ENCODE measurements at regions of chr17 and their contacts with region 1.

Region 1: DNA sequence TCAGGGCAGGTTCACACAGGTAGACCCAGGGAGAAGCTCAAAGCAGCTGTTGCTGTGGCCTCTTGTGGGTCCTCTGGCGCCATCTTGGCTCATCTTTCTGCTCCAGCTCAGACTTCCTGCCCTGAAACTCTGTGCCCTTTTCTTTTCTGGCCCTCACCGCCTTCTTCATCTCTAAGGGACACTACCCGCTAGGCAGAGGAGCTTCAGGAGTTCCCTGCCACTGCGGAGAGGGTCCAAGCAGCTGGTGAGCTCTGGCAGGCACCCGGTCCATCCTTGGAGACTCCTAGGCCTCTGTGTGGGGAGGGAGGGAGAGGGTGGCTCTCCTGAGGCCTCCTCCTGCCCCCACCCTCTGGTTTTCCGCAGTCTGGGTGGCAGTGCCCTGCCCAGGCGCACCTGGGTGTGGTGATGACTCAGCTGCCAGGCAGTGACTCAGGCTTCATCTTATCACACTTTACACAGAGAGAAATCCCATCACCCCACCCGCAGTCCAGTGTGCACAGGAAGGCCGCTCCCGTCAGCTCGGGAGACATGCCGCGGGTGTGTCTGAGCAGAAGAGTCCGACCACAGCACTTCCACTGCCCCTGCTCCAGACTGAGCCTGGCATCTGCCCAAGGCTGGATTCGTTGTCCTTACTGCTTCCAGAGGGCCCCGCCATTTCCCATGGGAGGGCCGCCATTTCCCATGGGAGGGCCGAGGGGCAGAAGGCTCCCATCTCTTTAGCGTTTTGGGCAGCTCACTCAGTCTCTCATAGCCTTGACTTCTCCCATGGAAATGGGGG is 7.3 kb downstream of the NT5C start:
- DNase-seq: peak in 4 of 5 donors; percentile 30 to 79 (median 40)
- H3K4me3 ChIP-seq: no peak overlapping the region
- H3K4me3 Mint-ChIP-seq: peak overlapping the region in 7 of 8 donors; percentile 4 to 75 (median 46)
- H3K27ac ChIP-seq: peak overlapping the region; percentile 21
- H3K27ac Mint-ChIP-seq: peak overlapping the region; percentile 67 to 93 (median 85)
- H3K4me1 ChIP-seq: peaks cover 30% of the 10 kb centered on the region
- H3K4me1 Mint-ChIP-seq: peaks cover 24 to 40% (median 30%) of the 10 kb centered on the region in 4 donors
- H3K27me3 ChIP-seq: no peaks in the 10 kb centered on the region
- H3K27me3 Mint-ChIP-seq: no peaks in the 10 kb centered on the region

Region 2: DNA sequence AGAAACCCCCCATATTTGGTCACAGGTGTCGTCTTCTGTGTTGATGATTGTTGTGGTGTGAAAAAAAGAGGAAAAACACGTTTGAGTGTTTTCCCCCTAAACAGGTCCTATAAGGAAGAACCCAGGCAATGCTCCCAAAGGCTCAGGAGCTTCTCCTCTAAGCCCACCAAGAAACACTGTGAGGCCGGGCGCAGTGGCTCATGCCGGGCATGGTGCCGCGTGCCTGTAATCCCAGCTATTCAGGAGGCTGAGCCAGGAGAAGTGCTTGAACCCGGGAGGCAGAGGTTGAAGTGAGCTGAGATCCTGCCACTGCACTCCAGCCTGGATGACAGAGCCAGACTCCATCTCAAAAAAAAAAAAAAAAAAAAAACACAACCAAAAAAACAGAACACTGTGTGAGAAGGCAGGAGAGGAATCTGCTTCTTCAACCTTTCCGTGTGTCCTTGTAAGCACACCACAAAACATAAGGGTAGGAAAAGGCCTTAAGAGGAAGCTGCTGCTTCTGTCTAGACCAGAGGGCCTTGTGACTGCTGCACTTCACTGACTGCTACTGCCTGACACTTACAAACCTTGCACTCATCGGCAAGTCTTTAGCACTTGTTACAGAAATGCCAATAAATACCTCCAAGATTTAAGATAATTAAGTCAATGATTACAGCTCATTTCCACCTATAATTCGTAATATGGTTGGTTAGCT is 20.7 kb after region 1 on chr17:
- CTCF ChIA-PET with region 1: no interaction called
- POLR2A ChIA-PET with region 1: interaction called, 12 read pairs
- intact Hi-C with region 1: no loop called
- DNase-seq: no peak
- H3K4me3 ChIP-seq: no peak overlapping the region
- H3K4me3 Mint-ChIP-seq: no peak overlapping the region
- H3K27ac ChIP-seq: no peak overlapping the region
- H3K27ac Mint-ChIP-seq: peak overlapping the region in 3 of 7 donors; percentile 42 to 70 (median 57)
- H3K4me1 ChIP-seq: peaks cover 16% of the 10 kb centered on the region
- H3K4me1 Mint-ChIP-seq: peaks cover 15 to 26% (median 21%) of the 10 kb centered on the region in 4 donors
- H3K27me3 ChIP-seq: no peaks in the 10 kb centered on the region
- H3K27me3 Mint-ChIP-seq: no peaks in the 10 kb centered on the region

Measured in CD4-positive, alpha-beta memory T cell (primary cell).